Vagina (tissue), 2 donors: ENCODE measurements at regions of chr1 and their contacts with region 1.

Region 1: DNA sequence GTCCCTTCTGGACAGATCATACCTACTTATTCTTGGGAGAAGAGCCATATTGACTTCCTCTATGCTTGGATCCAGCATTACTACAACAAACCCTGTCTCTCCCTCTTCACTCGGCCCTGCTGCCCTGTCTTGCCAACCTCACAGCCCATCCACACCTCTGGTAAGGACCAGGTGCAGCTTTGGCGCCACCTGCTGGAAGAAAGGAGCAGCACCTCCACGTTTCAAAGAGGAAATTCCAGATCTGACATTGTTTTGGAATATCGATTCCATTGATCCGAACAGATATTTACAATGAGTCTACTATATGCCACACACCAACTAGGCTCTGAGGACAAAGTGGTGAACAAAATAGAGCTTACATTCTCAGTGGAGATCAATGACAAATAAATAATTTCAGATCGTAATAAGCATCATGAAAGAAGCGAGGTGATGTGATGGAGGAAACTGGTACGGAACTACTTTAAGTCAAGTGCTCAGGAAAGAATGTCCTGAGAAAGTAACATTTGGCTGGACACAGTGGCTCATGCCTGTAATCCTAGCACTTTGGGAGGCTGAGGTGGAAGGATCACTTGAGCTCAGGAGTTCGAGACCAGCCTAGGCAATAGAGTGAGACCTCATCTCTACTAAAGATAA is 18.7 kb downstream of the MFSD2A start:
- DNase-seq: no peak
- H3K4me3 ChIP-seq: no peak overlapping the region
- H3K27ac ChIP-seq: no peak overlapping the region
- H3K4me1 ChIP-seq: peaks cover 4% of the 10 kb centered on the region
- H3K27me3 ChIP-seq: no peaks in the 10 kb centered on the region
- CTCF ChIP-seq: peak; percentile 85 to 94 (median 86)
- POLR2A ChIP-seq: no peak

Region 2: GRCh38 chr1:39816415-39817090 is 157.1 kb before region 1 on chr1:
- intact Hi-C with region 1: loop called (anchors 2 kb)
- DNase-seq: no peak
- H3K4me3 ChIP-seq: no peak overlapping the region
- H3K27ac ChIP-seq: no peak overlapping the region
- H3K4me1 ChIP-seq: peaks cover 8% of the 10 kb centered on the region
- H3K27me3 ChIP-seq: no peaks in the 10 kb centered on the region
- CTCF ChIP-seq: peak; percentile 76 to 96 (median 95)
- POLR2A ChIP-seq: no peak

Region 3: GRCh38 chr1:39919545-39919944 is 54.1 kb before region 1 on chr1:
- intact Hi-C with region 1: loop called (anchors 5 kb)
- DNase-seq: no peak
- H3K4me3 ChIP-seq: no peak overlapping the region
- H3K27ac ChIP-seq: no peak overlapping the region
- H3K4me1 ChIP-seq: peaks cover 7% of the 10 kb centered on the region
- H3K27me3 ChIP-seq: no peaks in the 10 kb centered on the region
- CTCF ChIP-seq: peak in 1 of 3 experiments; percentile 42
- POLR2A ChIP-seq: no peak